ENCODE measurements at regions of chr18 and their contacts with region 1.

Region 1: GRCh38 chr18:3665780-3666525 is 216.0 kb downstream of the TGIF1 start:
- DNase-seq: peak; percentile 30
- ATAC-seq: peak; percentile 81
- H3K4me3 ChIP-seq: no peak overlapping the region
- H3K27ac ChIP-seq: no peak overlapping the region
- H3K4me1 ChIP-seq: peaks cover 4% of the 10 kb centered on the region
- H3K27me3 ChIP-seq: no peaks in the 10 kb centered on the region
- CTCF ChIP-seq: peak; percentile 86 to 93 (median 92)
- EP300 ChIP-seq: no peak
- POLR2A ChIP-seq: no peak
- RAD21 ChIP-seq: peak; percentile 99

Region 2: GRCh38 chr18:3281456-3282400 is 384.2 kb before region 1 on chr18:
- CTCF ChIA-PET with region 1: interaction called, 204 read pairs
- POLR2A ChIA-PET with region 1: interaction called, 3 read pairs
- RAD21 ChIA-PET with region 1: interaction called, 76 read pairs
- SMC1A ChIA-PET with region 1: interaction called, 72 read pairs
- in situ Hi-C with region 1: loop called (anchors 5 kb)
- intact Hi-C with region 1: loop called (anchors 1 kb)
- DNase-seq: no peak
- ATAC-seq: peak; percentile 69
- H3K4me3 ChIP-seq: no peak overlapping the region
- H3K27ac ChIP-seq: no peak overlapping the region
- H3K4me1 ChIP-seq: peaks cover 24% of the 10 kb centered on the region
- H3K27me3 ChIP-seq: no peaks in the 10 kb centered on the region
- CTCF ChIP-seq: peak; percentile 35 to 66 (median 46); a peak in 4 of 6 replicates
- EP300 ChIP-seq: no peak
- POLR2A ChIP-seq: no peak
- RAD21 ChIP-seq: peak; percentile 75

Region 3: DNA sequence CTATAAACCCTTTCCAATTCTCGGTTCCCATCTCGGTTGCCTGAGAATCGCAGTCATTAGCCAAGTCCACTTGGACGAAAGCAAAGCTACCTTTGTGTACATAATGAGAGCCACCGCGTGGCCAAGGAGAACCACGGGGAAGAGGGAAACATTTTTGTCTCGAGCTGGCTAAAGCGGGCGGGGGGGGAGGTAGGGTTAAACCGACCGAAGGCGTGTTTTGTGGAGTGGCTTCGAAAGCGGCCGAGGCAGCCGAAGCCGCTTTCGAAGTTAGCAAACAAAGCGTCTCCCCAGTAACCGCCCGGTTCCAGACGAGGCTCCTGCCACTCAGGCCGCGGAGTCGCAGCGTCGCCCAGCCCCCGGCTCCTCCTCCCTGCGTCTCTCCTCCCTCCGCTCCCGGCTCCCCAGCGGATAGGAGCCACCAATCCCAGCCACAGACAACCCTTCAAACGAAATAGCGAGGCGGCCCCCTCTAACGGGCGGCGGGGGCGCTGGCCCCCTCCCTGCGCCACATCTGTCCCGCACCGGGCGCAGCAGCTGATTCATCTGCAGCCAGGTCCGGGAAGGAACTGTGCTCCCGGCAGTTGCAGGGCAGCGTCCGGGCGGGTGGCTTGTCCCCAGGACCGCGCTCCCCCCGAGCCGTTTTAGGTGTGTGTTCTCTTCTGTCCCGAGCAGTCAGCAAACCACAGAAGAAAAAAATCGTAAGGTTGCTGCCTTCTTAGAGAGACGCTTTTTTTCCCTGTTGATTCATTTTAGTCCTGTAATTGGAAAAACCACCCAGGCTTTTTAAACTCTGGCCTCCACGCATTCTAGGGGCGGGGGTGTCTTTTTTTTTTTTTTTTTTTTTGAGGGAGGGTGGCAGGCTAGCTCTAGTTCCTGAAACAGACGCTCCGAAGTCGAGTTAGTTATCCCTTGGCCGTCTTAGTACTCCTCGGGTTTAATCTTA is 217.8 kb before region 1 on chr18:
- CTCF ChIA-PET with region 1: interaction called, 51 read pairs
- POLR2A ChIA-PET with region 1: interaction called, 3 read pairs
- RAD21 ChIA-PET with region 1: interaction called, 17 read pairs
- SMC1A ChIA-PET with region 1: interaction called, 4 read pairs
- in situ Hi-C with region 1: no loop called
- intact Hi-C with region 1: loop called (anchors 5 kb)
- DNase-seq: peak; percentile 19
- ATAC-seq: peak; percentile 76
- H3K4me3 ChIP-seq: peak overlapping the region; percentile 82
- H3K27ac ChIP-seq: peak overlapping the region; percentile 73
- H3K4me1 ChIP-seq: peaks cover 19% of the 10 kb centered on the region
- H3K27me3 ChIP-seq: peaks cover 2 to 21% of the 10 kb centered on the region in 2 experiments
- CTCF ChIP-seq: 0 out of 6 replicates have a peak, but pooled peaks of 1 of the 3 experiments have one; percentile 14
- EP300 ChIP-seq: no peak
- POLR2A ChIP-seq: peak; percentile 71; the same call in 1 of the 2 replicates
- RAD21 ChIP-seq: peak; percentile 34; the same call in 1 of the 2 replicates

Region 4: GRCh38 chr18:3585656-3586509 is 80.1 kb before region 1 on chr18:
- CTCF ChIA-PET with region 1: interaction called, 26 read pairs
- POLR2A ChIA-PET with region 1: no interaction called
- RAD21 ChIA-PET with region 1: interaction called, 18 read pairs
- SMC1A ChIA-PET with region 1: interaction called, 52 read pairs
- in situ Hi-C with region 1: no loop called
- intact Hi-C with region 1: no loop called
- DNase-seq: no peak
- ATAC-seq: peak; percentile 84
- H3K4me3 ChIP-seq: peak overlapping the region; percentile 28; the same call in 1 of the 2 replicates
- H3K27ac ChIP-seq: peak overlapping the region; percentile 75
- H3K4me1 ChIP-seq: peaks cover 30% of the 10 kb centered on the region
- H3K27me3 ChIP-seq: no peaks in the 10 kb centered on the region
- CTCF ChIP-seq: peak; percentile 70 to 76 (median 72)
- EP300 ChIP-seq: no peak; a peak in 1 of 4 replicates
- POLR2A ChIP-seq: no peak
- RAD21 ChIP-seq: peak; percentile 76

Region 5: DNA sequence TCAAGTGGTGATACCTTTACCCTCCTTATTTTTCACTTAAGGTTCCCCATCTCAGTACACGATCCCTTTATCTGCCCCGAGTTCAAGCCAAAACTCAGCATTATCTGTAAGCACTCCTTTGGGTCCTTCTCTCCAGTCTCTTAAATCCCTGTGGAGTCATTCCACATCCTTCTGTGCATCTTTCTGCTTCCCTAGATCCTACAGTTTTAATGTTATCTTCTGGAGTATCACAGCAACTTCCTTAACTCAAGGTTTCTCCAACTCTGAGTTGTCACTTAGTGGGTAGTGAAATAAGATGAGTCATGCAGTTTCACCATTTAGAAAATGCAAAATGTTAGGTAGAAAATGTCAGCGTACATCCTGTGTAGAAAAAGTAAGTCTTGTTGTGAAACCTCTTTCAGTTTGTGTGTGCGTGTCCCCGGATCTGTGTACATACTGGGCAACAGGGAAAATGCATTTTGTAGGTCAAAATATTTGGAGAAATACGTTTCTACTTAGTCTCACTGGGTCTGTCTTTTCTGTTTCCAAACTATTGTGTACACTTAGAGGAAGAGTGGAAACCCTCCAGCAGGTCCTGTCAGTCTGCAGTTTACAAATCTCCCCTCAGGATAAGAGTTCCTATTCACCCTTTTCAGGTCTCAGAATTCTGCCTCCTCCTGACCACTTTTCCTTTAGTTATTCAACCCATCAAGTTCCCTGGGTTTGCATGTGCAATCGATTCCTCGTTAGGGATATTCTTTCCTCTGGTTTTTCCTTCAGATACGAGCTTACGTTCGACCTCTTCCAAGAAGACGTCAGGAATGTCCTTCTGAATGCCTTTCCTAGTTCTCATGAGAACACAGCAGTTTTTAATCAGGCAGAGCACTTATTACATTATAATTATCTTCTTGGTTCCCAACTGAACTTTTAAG is 61.2 kb before region 1 on chr18:
- CTCF ChIA-PET with region 1: interaction called, 14 read pairs
- POLR2A ChIA-PET with region 1: interaction called, 4 read pairs
- RAD21 ChIA-PET with region 1: interaction called, 22 read pairs
- SMC1A ChIA-PET with region 1: interaction called, 27 read pairs
- in situ Hi-C with region 1: no loop called
- intact Hi-C with region 1: no loop called
- DNase-seq: peak; percentile 80
- ATAC-seq: peak; percentile 90
- H3K4me3 ChIP-seq: peak overlapping the region; percentile 57
- H3K27ac ChIP-seq: peak overlapping the region; percentile 80
- H3K4me1 ChIP-seq: peaks cover 25% of the 10 kb centered on the region
- H3K27me3 ChIP-seq: no peaks in the 10 kb centered on the region
- CTCF ChIP-seq: no peak
- EP300 ChIP-seq: peak; percentile 49 to 57; a peak in 2 of 4 replicates
- POLR2A ChIP-seq: 0 out of 2 replicates have a peak, but pooled peaks have one; percentile 32
- RAD21 ChIP-seq: no peak

Region 6: GRCh38 chr18:3692113-3692621 is 26.2 kb after region 1 on chr18:
- CTCF ChIA-PET with region 1: interaction called, 23 read pairs
- POLR2A ChIA-PET with region 1: no interaction called
- RAD21 ChIA-PET with region 1: no interaction called
- SMC1A ChIA-PET with region 1: interaction called, 15 read pairs
- in situ Hi-C with region 1: no loop called
- intact Hi-C with region 1: no loop called
- DNase-seq: no peak
- ATAC-seq: peak; percentile 59
- H3K4me3 ChIP-seq: no peak overlapping the region
- H3K27ac ChIP-seq: no peak overlapping the region
- H3K4me1 ChIP-seq: no peaks in the 10 kb centered on the region
- H3K27me3 ChIP-seq: no peaks in the 10 kb centered on the region
- CTCF ChIP-seq: no peak
- EP300 ChIP-seq: no peak
- POLR2A ChIP-seq: no peak
- RAD21 ChIP-seq: no peak